ENCODE measurements at regions of chr2 and their contacts with region 1.

Region 1: DNA sequence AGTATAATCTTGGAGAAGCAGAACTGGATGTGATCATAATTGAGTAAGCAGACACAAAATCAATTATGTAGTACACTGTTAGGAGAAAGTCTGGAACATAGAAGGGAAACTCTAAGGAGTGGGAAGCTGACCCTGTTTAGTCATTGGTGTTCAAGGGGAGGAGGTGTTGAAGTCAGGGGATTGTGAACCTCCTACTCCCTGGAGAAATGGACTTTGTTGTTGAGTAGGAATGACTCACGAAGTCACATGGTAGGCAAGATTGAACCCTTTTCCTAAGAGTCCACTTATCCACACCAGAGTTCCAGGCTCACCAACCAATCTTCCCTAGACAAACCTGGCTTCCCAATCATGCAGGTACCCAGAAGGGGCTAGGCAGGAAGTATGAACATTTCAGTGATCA is 81.0 kb upstream of the BCL11A start:
- DNase-seq: no peak
- ATAC-seq: no peak
- H3K4me3 ChIP-seq: no peak overlapping the region
- H3K4me3 Mint-ChIP-seq: no peak overlapping the region
- H3K27ac ChIP-seq: no peak overlapping the region
- H3K27ac Mint-ChIP-seq: no peak overlapping the region
- H3K4me1 ChIP-seq: no peaks in the 10 kb centered on the region
- H3K4me1 Mint-ChIP-seq: no peaks in the 10 kb centered on the region
- H3K27me3 ChIP-seq: peaks cover 0 to 10% of the 10 kb centered on the region in 2 experiments
- H3K27me3 Mint-ChIP-seq: peaks cover 16% of the 10 kb centered on the region
- CTCF ChIP-seq: no peak

Region 2: DNA sequence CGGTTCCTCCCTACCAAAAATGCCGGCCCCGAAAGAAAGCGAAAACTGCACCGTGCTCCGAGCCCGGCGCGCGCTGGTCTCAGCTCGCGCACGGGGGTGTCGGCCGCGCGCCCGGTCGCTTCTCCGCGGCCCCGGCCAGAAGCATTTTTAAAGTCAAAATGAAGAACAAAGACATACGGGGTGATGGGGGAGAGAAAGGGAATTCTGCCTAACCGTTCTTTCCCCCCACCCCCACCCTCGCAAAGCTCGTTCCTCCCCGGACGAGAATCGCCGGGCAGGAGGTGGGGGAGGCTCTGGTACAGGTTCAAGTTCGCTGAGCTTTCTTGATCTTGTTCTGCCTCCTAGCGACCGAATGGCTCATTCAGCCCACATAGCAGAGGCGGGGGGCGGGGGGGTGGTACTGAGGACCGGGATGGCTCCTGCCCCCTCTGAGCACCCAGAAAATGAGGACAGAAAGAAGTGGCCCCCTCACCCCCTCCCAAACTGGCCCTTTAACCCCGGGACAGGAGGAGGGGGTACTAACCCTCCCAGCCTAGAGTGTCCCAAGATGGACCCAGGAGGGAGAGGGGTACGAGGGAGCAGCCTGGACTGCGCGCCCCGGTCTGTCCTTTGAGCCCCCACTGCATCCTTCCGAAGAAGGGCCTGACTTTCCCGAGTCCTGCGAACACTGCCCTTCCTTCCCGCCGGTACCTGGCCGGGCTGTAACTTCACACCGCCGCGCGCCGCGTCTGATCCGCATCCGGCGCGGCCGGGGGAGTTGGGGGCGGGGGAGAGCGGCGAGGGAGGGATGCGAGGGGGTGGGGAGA is 84.1 kb before region 1 on chr2:
- CTCF ChIA-PET with region 1: no interaction called
- POLR2A ChIA-PET with region 1: no interaction called
- intact Hi-C with region 1: no loop called
- DNase-seq: peak in 8 of 14 experiments; percentile 23 to 76 (median 50)
- ATAC-seq: peak; percentile 62
- H3K4me3 ChIP-seq: peak overlapping the region; percentile 62
- H3K4me3 Mint-ChIP-seq: peak overlapping the region; percentile 96
- H3K27ac ChIP-seq: peak overlapping the region in 1 of 2 donors; percentile 53
- H3K27ac Mint-ChIP-seq: peak overlapping the region; percentile 86
- H3K4me1 ChIP-seq: peaks cover 61% of the 10 kb centered on the region
- H3K4me1 Mint-ChIP-seq: peaks cover 45% of the 10 kb centered on the region
- H3K27me3 ChIP-seq: peaks cover 58 to 83% of the 10 kb centered on the region in 2 experiments
- H3K27me3 Mint-ChIP-seq: peaks cover 78% of the 10 kb centered on the region
- CTCF ChIP-seq: peak; percentile 21

Region 3: DNA sequence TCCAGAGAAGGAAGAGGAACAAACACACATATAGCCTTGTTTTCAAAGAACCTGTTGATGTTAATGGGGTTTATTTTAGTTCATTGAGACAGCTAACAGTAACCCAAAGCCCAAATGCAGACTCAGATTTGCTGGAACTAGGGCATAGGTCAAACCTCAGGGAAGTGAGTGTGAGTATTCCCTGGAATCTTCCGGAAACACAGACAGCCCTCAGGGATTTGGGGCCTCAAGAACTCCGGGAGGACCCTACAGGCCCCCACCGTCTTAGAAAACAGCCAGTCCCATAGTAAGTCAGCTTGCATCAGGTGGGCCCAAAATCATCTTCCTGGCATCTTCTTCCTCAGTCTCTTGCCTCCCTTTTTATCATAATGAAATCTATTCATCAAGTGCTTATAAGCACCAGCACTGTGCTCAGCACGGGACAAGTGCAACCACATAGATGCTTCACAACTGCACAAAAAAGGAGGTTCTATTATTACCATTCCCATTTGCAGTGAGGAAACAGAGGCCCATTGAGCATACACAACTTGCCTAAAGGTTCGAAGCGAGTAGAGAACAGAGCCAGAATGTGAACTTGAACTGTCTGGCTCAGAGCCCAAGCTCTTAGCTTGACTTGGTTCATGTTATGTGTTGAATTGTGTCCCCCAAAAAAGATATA is 30.8 kb before region 1 on chr2:
- CTCF ChIA-PET with region 1: no interaction called
- POLR2A ChIA-PET with region 1: no interaction called
- intact Hi-C with region 1: loop called in 1 of 2 experiments (anchors 1 kb)
- DNase-seq: no peak
- ATAC-seq: no peak
- H3K4me3 ChIP-seq: no peak overlapping the region
- H3K4me3 Mint-ChIP-seq: no peak overlapping the region
- H3K27ac ChIP-seq: no peak overlapping the region
- H3K27ac Mint-ChIP-seq: no peak overlapping the region
- H3K4me1 ChIP-seq: no peaks in the 10 kb centered on the region
- H3K4me1 Mint-ChIP-seq: no peaks in the 10 kb centered on the region
- H3K27me3 ChIP-seq: no peaks in the 10 kb centered on the region
- H3K27me3 Mint-ChIP-seq: peaks cover 19% of the 10 kb centered on the region
- CTCF ChIP-seq: no peak

Measured in CD4-positive, alpha-beta T cell (primary cell).